Activated CD4-positive, alpha-beta T cell treated with anti-CD3 and anti-CD28 coated beads, Interleukin-2, amount 10 ng/mL, durations not matched to agents 7 days and 5 days (primary cell): ENCODE measurements at regions of chr17 and their contacts with region 1.

Region 1: GRCh38 chr17:78736526-78737079 is 45.5 kb downstream of the CYTH1 start:
- DNase-seq: peak; percentile 79
- H3K4me3 Mint-ChIP-seq: peak overlapping the region; percentile 84
- H3K27ac Mint-ChIP-seq: peak overlapping the region; percentile 89
- H3K4me1 Mint-ChIP-seq: peaks cover 90% of the 10 kb centered on the region
- H3K27me3 Mint-ChIP-seq: no peaks in the 10 kb centered on the region

Region 2: GRCh38 chr17:77501751-77502625 is 1234.6 kb before region 1 on chr17:
- CTCF ChIA-PET with region 1: interaction called, 10 read pairs
- POLR2A ChIA-PET with region 1: no interaction called
- DNase-seq: peak; percentile 10
- H3K4me3 Mint-ChIP-seq: no peak overlapping the region
- H3K27ac Mint-ChIP-seq: no peak overlapping the region
- H3K4me1 Mint-ChIP-seq: peaks cover 3% of the 10 kb centered on the region
- H3K27me3 Mint-ChIP-seq: no peaks in the 10 kb centered on the region

Region 3: DNA sequence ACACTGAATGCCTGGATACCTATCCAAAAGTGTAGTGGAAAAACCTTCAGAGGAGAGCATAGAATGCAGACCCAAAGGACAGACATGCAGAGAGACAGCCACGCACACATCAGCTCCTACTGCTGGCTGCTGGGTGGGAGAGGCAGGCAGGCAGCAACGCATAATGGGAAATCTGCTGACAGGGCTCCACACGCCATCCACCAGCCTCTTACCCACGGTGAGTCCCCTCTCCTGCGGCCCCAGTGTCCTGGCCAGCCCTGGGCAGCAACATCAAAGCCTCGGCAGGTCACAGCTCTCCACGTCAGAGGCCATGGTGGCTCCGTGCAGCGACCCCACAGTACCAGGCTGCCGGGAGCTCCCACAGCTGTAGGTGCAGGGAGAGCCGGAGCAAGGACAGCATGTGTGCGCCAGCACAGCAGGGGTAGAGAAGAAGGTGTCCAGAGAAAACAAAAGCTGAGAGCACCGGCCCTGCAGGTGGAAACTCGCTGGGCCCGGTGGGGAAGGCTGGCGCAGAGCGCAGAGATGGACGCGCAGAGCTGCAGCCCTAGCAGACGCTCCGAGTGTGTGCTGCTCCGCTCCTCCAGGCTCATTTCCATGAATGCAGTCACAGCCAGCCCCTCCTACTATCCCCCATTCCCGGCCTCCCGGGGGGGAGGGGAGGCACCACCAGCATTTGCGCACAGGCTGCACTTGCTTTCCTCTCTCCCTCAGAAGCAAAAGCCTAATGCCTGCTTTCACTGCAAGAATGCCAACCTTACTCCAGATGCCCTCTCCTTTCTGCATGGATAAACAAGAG is 13.4 kb before region 1 on chr17:
- CTCF ChIA-PET with region 1: interaction called, 10 read pairs
- POLR2A ChIA-PET with region 1: interaction called, 5 read pairs
- DNase-seq: no peak
- H3K4me3 Mint-ChIP-seq: no peak overlapping the region
- H3K27ac Mint-ChIP-seq: peak overlapping the region; percentile 73
- H3K4me1 Mint-ChIP-seq: peaks cover 93% of the 10 kb centered on the region
- H3K27me3 Mint-ChIP-seq: no peaks in the 10 kb centered on the region